Upper lobe of right lung (tissue), 1 donor: ENCODE measurements at regions of chr22 and their contacts with region 1.

Region 1: DNA sequence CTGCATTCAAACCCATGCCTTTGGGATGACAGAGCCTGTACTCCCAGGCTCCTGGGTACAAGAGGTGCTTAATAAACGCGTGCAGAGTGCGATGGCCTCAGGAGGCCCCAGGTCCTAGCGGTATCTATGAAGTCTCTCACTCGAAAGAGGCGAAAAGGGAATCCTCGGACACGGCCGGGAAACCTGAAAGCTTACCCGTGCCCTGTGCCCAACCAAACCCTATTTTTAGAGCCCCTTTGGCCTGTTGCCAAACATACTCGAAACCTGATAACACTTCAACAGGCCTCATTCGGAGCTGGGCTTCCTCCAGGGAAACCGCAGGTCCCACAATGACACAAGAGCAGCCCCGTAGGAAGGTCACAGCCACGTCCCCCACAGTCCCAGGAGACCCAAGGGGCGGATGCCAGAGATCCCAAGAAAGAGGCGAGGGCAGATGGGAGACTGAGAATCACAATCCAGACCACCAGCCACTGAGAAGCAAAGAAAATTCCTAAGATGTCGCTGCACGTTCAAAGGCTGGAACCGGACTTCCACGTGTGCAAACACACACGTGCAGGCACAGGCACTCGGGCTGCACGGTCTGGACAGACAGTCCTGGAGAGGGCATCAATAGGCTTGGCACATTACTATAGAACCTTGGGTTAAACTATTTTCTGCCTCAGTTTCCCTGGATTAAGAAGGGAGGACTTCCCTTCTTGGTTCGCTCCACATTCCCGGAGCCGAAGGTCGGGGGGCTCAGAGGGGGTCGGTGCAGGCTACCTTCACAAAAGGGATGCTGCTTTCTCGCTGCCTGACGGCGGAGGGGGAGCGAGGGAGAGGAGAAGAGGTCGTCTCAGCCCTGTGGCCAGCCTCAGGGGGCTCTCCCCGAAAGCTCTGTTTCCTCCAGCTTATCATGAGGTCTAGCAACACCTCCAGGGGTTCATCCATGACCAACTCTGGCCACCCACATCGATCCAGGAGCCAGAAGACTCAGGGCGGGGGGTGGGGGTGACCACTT is 8.2 kb downstream of the PDGFB start:
- DNase-seq: no peak
- ATAC-seq: no peak
- H3K4me3 ChIP-seq: no peak overlapping the region
- H3K27ac ChIP-seq: no peak overlapping the region
- H3K4me1 ChIP-seq: peaks cover 63% of the 10 kb centered on the region
- H3K27me3 ChIP-seq: no peaks in the 10 kb centered on the region
- CTCF ChIP-seq: no peak

Region 2: DNA sequence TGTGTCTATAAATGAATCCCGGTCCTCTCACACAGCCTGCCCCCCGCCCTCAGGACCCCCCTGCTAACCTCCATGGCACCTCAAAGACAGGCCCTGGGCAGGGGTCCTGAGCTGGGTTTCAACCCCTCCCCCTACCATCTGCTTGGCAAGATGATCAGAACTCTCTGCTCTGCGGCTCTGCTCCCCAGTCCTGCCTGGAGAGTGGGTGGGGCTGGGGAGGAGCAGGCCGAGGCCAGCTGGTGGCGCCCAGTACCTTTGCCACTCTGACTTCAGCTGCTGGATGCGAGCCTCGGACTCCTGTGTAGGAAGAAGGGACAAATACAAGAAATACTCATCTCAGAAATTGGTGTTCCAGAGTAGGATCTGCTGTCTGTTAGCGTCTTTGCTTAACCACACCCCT is 495.9 kb before region 1 on chr22:
- intact Hi-C with region 1: no loop called
- DNase-seq: no peak
- ATAC-seq: no peak
- H3K4me3 ChIP-seq: no peak overlapping the region
- H3K27ac ChIP-seq: no peak overlapping the region
- H3K4me1 ChIP-seq: no peaks in the 10 kb centered on the region
- H3K27me3 ChIP-seq: no peaks in the 10 kb centered on the region
- CTCF ChIP-seq: no peak

Region 3: DNA sequence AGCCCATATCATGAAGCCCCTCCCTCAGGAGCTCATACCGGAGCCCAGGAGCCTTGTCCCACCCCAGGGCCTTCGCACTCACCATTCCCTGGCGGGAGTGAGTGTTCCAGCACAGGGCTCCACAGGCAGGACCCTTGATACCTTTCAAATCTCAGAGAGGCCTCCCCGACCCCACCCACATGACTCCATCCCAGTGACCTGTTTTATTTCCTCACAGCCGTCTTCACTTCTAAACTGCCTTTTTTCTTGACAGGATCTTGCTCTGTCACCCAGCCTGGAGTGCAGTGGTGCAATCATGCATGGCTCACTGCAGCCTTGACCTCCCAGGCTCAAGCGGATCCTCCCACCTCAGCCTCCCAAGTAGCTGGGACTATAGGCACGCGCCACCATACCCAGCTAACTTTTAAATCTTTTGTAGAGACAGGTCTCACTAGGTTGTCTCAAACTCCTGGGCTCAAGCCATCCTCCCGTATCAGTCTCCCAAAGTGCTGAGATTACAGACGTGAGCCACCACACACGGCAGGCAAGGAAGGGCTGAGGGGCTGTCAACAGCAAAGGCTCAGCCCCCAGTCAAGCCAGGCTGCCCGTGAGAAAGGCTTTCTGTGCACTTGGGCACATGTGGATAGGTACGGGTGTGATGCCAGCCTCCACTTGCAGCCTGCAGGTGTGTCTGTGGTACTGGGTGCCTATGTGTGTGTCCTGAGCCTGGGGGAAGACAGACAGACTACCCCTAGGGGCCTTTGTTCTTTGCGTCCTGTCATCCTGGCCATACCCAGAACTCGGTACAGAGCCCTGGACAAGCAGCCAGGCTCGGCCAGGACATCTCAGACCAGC is 73.5 kb after region 1 on chr22:
- intact Hi-C with region 1: loop called (anchors 5 kb)
- DNase-seq: no peak
- ATAC-seq: no peak
- H3K4me3 ChIP-seq: no peak overlapping the region
- H3K27ac ChIP-seq: no peak overlapping the region
- H3K4me1 ChIP-seq: peaks cover 24% of the 10 kb centered on the region
- H3K27me3 ChIP-seq: no peaks in the 10 kb centered on the region
- CTCF ChIP-seq: no peak